MCF 10A (cell line): ENCODE measurements at regions of chr5 and their contacts with region 1.

Region 1: DNA sequence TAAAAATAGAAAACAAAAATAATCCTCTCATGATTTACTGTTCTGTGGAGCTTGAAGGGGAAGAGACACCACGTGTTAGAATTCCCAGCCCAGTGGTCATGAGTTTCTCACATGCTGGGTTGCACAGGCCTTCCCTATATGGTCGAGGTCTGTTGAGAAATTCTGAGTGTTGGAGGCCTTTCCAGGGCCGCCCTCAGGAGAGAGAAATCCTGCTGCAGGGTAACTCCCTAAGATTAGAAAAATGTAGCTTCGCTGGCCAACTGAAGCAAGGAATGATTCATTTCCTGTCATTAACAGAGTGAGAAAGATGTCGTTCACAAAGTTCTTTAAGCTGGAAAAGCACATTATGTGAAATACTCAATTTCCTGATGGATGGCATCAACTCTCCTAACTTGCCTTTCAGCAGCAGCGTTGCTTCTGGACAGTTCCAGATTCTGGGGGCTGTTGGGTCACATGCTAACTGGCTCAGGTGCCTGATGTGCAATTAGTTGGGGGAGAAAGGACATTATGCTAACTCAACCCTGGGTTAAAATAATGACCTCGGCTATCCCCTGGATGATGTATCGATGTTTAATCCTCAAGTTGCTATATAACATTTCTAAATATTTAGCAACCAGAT is 104.8 kb upstream of the CD180 start:
- DNase-seq: peak; percentile 99
- H3K4me3 Mint-ChIP-seq: no peak overlapping the region
- H3K27ac Mint-ChIP-seq: peak overlapping the region; percentile 97
- H3K4me1 Mint-ChIP-seq: peaks cover 56% of the 10 kb centered on the region
- H3K27me3 Mint-ChIP-seq: no peaks in the 10 kb centered on the region
- CTCF ChIP-seq: no peak

Region 2: GRCh38 chr5:66963559-66963971 is 337.8 kb before region 1 on chr5:
- CTCF ChIA-PET with region 1: no interaction called
- POLR2A ChIA-PET with region 1: no interaction called
- intact Hi-C with region 1: no loop called
- DNase-seq: peak; percentile 34
- H3K4me3 Mint-ChIP-seq: no peak overlapping the region
- H3K27ac Mint-ChIP-seq: no peak overlapping the region
- H3K4me1 Mint-ChIP-seq: peaks cover 20% of the 10 kb centered on the region
- H3K27me3 Mint-ChIP-seq: no peaks in the 10 kb centered on the region
- CTCF ChIP-seq: no peak

Region 3: GRCh38 chr5:67257500-67257899 is 43.9 kb before region 1 on chr5:
- CTCF ChIA-PET with region 1: interaction called, 3 read pairs
- POLR2A ChIA-PET with region 1: interaction called, 19 read pairs
- intact Hi-C with region 1: no loop called
- DNase-seq: peak; percentile 95
- H3K4me3 Mint-ChIP-seq: peak overlapping the region; percentile 22
- H3K27ac Mint-ChIP-seq: peak overlapping the region; percentile 98
- H3K4me1 Mint-ChIP-seq: peaks cover 44% of the 10 kb centered on the region
- H3K27me3 Mint-ChIP-seq: no peaks in the 10 kb centered on the region
- CTCF ChIP-seq: no peak

Region 4: DNA sequence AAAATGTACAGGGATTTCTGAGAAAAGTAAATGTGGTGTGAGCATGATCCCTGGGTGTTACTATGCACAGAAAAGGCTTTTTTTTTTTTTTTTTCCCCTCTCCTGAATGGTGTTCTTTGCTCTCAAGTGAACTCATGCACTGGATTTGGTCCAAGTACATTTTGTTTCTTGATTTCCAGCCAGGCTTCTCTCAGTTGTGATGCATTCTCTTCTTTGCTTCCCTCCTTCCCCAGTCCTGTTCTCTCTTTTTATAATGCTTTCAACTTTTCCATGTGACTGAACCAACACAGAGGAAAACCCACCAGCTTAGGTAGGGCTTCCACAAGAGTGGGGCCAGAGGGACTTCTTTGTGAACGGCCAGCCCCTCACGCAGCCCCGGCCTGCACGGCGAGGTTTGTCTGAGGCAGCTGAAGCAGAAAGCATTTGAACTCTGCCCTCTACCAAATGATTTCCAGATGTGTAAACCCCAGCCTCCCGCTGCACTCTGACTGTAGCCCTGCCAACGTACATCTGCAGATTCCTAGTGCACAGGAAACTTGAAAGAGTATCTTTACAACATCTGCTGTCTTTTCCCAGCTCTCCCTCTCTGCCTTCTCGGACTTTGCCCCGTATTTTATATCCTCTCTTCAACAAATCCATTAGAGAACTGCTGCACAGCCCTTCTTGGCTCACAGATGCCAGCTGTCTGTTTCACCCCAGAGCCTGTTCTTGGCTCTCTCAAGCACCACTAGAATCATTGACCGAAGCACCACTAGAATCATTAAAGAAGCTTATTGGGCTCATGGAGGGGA is 33.0 kb before region 1 on chr5:
- CTCF ChIA-PET with region 1: interaction called, 3 read pairs
- POLR2A ChIA-PET with region 1: interaction called, 70 read pairs
- intact Hi-C with region 1: loop called (anchors 1 kb)
- DNase-seq: peak; percentile 97
- H3K4me3 Mint-ChIP-seq: no peak overlapping the region
- H3K27ac Mint-ChIP-seq: no peak overlapping the region
- H3K4me1 Mint-ChIP-seq: peaks cover 18% of the 10 kb centered on the region
- H3K27me3 Mint-ChIP-seq: no peaks in the 10 kb centered on the region
- CTCF ChIP-seq: no peak

Region 5: GRCh38 chr5:67283275-67283987 is 18.0 kb before region 1 on chr5:
- CTCF ChIA-PET with region 1: no interaction called
- POLR2A ChIA-PET with region 1: interaction called, 13 read pairs
- intact Hi-C with region 1: no loop called
- DNase-seq: no peak
- H3K4me3 Mint-ChIP-seq: no peak overlapping the region
- H3K27ac Mint-ChIP-seq: peak overlapping the region; percentile 24
- H3K4me1 Mint-ChIP-seq: peaks cover 21% of the 10 kb centered on the region
- H3K27me3 Mint-ChIP-seq: no peaks in the 10 kb centered on the region
- CTCF ChIP-seq: no peak

Region 6: DNA sequence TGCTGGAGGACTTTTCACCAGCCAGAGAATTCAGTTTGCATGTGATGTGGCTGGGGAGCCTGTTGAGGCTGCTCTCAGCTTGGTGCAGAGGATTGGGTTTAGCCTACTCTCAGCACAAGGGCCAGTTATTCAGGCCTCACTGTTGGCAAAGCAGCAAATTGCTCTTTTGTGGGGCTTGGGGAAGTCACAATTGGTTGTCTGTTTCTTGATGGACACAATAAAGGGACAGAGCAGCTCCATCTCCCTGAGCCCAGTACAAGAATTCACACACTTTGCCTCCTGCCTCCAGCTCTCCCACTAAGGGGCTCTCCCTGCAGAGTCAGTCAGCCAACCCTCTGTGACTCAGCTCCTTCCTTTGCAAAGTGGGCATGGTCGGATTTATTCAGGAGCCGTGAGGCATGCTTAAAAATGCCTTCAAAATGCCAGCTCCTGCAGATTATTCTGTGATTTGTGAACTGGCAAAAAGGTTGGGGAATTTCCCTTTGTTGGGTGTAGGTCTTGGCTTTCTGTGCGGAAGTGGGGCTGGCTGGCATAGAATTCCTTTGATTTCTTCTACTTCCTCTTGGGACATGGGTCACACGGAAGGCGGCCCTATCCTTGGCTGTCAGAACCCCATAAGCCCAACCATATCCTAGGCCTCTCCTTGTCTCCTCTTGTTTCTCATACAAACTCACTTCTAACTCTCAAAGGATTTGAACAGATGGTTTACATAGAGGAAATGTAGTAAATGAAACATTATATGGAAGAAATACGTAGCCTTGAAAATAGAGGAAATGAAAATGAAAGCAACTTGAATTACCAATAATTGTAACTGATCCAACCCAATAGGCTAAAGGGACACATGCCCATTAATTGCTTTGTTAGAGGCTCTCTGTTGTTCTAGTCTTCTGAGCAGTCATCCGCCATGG is 13.9 kb after region 1 on chr5:
- CTCF ChIA-PET with region 1: interaction called, 5 read pairs
- POLR2A ChIA-PET with region 1: interaction called, 23 read pairs
- intact Hi-C with region 1: no loop called
- DNase-seq: peak; percentile 85
- H3K4me3 Mint-ChIP-seq: no peak overlapping the region
- H3K27ac Mint-ChIP-seq: peak overlapping the region; percentile 92
- H3K4me1 Mint-ChIP-seq: peaks cover 31% of the 10 kb centered on the region
- H3K27me3 Mint-ChIP-seq: no peaks in the 10 kb centered on the region
- CTCF ChIP-seq: no peak

Region 7: GRCh38 chr5:67896311-67896929 is 595.0 kb after region 1 on chr5:
- CTCF ChIA-PET with region 1: no interaction called
- POLR2A ChIA-PET with region 1: interaction called, 20 read pairs
- intact Hi-C with region 1: no loop called
- DNase-seq: peak; percentile 27
- H3K4me3 Mint-ChIP-seq: no peak overlapping the region
- H3K27ac Mint-ChIP-seq: peak overlapping the region; percentile 82
- H3K4me1 Mint-ChIP-seq: peaks cover 39% of the 10 kb centered on the region
- H3K27me3 Mint-ChIP-seq: no peaks in the 10 kb centered on the region
- CTCF ChIP-seq: no peak